ENCODE measurements at regions of chr9 and their contacts with region 1.

Region 1: GRCh38 chr9:37903647-37904444 is at the start of gene SLC25A51:
- DNase-seq: peak; percentile 91 to 97 (median 94)
- H3K4me3 ChIP-seq: peak within 1 kb of the TSS; percentile 4 to 97 (median 86)
- H3K27ac ChIP-seq: peak within 1 kb of the TSS; percentile 1 to 93 (median 84)
- H3K4me1 ChIP-seq: peaks cover 0 to 11% of the 10 kb centered on the region in 2 donors
- H3K27me3 ChIP-seq: no peaks in the 10 kb centered on the region
- CTCF ChIP-seq: peak; percentile 78 to 99 (median 97)
- POLR2A ChIP-seq: peak in 1 of 2 donors; percentile 71
- total RNA-seq, gene SLC25A51: 11.9 to 28.3 (median 22.5) TPM

Region 2: GRCh38 chr9:37485389-37486219 is 418.2 kb before region 1 on chr9 and contains the start of gene POLR1E:
- intact Hi-C with region 1: loop called in 1 of 2 experiments (anchors 10 kb)
- DNase-seq: peak; percentile 94 to 98 (median 96)
- H3K4me3 ChIP-seq: peak within 1 kb of the TSS in 3 of 4 donors; percentile 27 to 75 (median 29)
- H3K27ac ChIP-seq: peak within 1 kb of the TSS; percentile 50 to 87 (median 63)
- H3K4me1 ChIP-seq: peaks cover 16 to 22% of the 10 kb centered on the region in 2 donors
- H3K27me3 ChIP-seq: no peaks in the 10 kb centered on the region
- CTCF ChIP-seq: no peak
- POLR2A ChIP-seq: peak; percentile 45 to 82
- total RNA-seq, gene POLR1E: 17.1 to 113 (median 21.1) TPM

Region 3: DNA sequence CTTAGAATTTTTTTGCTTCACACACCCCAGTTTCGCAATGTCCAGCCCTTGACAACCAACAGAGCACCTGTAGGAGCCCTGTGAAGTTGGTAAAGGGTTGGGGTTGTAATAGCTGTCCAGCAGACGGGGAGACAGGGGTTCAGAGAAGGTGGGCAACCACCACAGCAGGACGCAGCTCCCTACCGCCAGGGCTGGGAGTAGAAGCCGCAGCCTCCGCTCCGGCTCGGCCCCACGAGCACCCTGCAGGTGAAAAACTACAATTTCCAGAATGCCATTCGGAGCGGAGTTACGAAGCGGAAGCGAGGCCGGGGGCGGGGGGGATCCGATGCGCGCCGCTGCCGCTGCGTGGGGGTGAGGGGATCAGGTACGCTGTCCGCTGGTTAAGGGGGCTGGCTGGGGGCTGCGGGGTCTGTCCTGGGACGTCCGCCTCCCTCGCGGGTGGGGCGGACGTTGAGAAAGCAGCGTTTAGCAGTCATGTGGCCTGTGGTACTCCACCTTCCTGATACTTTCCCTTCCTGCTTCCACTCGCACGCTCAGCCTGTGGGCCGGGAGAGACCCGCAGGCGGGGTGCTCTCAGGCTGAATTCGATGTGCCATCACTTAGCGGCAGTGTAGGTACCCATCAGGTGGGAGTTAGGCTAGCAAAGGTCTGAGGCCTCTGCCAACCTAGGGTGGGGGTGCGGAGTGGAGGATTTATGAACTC is 150.2 kb before region 1 on chr9 and contains the start of gene TRMT10B:
- intact Hi-C with region 1: loop called in 1 of 2 experiments (anchors 10 kb)
- DNase-seq: peak; percentile 60 to 74 (median 67)
- H3K4me3 ChIP-seq: peak within 1 kb of the TSS; percentile 48 to 97 (median 93)
- H3K27ac ChIP-seq: peak within 1 kb of the TSS in 4 of 5 donors; percentile 36 to 89 (median 75)
- H3K4me1 ChIP-seq: peaks cover 5 to 9% of the 10 kb centered on the region in 2 donors
- H3K27me3 ChIP-seq: no peaks in the 10 kb centered on the region
- CTCF ChIP-seq: no peak
- POLR2A ChIP-seq: peak in 1 of 2 donors; percentile 14
- total RNA-seq, gene TRMT10B: 2.9 to 12.1 (median 7.3) TPM

Region 4: GRCh38 chr9:37800631-37801286 is 103.1 kb before region 1 on chr9 and contains the start of gene DCAF10:
- intact Hi-C with region 1: loop called (anchors 10 kb)
- DNase-seq: peak; percentile 84 to 91 (median 87)
- H3K4me3 ChIP-seq: peak within 1 kb of the TSS; percentile 19 to 91 (median 82)
- H3K27ac ChIP-seq: peak within 1 kb of the TSS; percentile 79 to 93 (median 90)
- H3K4me1 ChIP-seq: peaks cover 24 to 30% of the 10 kb centered on the region in 2 donors
- H3K27me3 ChIP-seq: no peaks in the 10 kb centered on the region
- CTCF ChIP-seq: peak in 2 of 6 experiments; percentile 12 to 42
- POLR2A ChIP-seq: peak; percentile 64 to 80
- total RNA-seq, gene DCAF10: 30.3 to 60.6 (median 48.0) TPM

Region 5: GRCh38 chr9:37852222-37852621 is 51.6 kb before region 1 on chr9:
- intact Hi-C with region 1: no loop called
- DNase-seq: no peak
- H3K4me3 ChIP-seq: no peak overlapping the region
- H3K27ac ChIP-seq: no peak overlapping the region
- H3K4me1 ChIP-seq: no peaks in the 10 kb centered on the region
- H3K27me3 ChIP-seq: no peaks in the 10 kb centered on the region
- CTCF ChIP-seq: no peak
- POLR2A ChIP-seq: no peak

Region 6: DNA sequence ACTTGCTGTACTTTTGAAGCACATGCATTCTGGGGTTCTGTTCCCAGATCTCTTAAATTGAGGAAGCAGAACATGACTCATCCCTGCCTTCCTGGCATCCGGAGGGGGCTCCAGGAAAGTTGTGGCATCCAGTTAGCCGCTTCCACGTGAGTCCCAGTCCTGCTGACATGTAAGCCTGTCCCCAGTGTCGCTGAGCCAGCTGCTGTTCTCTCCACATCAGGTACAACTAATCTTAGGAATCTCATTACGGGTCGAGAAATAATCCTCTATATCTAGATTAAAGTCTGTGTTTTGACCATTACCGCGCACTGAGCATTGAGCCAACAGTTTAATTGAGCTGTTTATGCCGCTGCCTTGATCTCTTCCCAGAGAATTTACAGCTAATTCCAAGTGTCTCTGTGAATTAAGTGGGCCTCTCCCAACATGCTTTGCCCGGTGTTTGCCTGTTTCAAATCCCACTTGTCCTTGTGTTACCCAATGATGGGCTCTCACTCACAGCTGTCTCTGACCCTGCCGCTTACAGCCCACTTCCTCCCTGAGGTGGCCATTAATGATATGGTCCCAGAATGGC is 175.7 kb after region 1 on chr9:
- intact Hi-C with region 1: loop called in 1 of 2 experiments (anchors 5 kb)
- DNase-seq: peak; percentile 19 to 70 (median 53)
- H3K4me3 ChIP-seq: no peak overlapping the region
- H3K27ac ChIP-seq: peak overlapping the region in 1 of 5 donors; percentile 38
- H3K4me1 ChIP-seq: peaks cover 0 to under 1% of the 10 kb centered on the region in 2 donors
- H3K27me3 ChIP-seq: no peaks in the 10 kb centered on the region
- CTCF ChIP-seq: no peak
- POLR2A ChIP-seq: no peak

Region 7: GRCh38 chr9:38362852-38363593 is 459.2 kb after region 1 on chr9:
- intact Hi-C with region 1: loop called in 1 of 2 experiments (anchors 5 kb)
- DNase-seq: peak; percentile 39 to 72 (median 66)
- H3K4me3 ChIP-seq: no peak overlapping the region
- H3K27ac ChIP-seq: peak overlapping the region in 1 of 5 donors; percentile 15
- H3K4me1 ChIP-seq: peaks cover 0 to 6% of the 10 kb centered on the region in 2 donors
- H3K27me3 ChIP-seq: no peaks in the 10 kb centered on the region
- CTCF ChIP-seq: peak; percentile 53 to 92 (median 72)
- POLR2A ChIP-seq: no peak

Measured in adrenal gland (tissue), 19 donors.